BJ (cell line): ENCODE measurements at regions of chr10 and their contacts with region 1.

Region 1: DNA sequence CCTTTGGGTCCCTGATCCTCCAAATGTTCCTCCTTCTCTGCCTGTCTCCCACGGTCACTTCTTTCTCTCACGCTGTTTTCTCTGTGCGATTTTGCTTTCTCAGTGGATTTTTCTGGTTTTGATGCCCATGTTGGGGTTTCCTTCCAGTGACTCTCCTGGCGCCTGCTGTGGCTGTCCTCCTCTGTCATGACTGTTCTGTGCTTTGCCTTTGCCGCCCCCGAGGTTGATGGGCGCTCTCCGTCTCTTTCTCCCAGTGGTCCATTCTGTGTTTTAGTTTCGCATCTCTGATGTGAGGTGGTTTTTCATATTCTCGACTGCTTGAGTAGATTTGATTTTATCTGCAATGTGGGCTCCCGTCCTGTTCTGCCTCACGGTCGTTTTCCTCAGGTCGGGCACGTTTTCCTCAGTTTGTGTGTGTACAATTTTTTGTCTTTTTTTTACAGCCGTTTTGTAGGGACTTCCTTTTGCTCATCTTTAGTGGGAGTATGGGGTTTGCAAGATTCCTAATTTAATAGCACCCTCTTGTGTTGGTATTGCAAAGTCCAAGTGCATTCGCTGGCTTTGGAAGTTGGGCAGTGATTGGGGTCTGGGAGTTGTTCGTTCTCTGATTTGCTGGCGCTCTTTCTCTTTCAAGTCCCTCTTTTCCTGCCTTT is 100.0 kb downstream of the INPP5A start:
- DNase-seq: no peak
- H3K4me3 ChIP-seq: no peak overlapping the region
- H3K27me3 ChIP-seq: no peaks in the 10 kb centered on the region
- CTCF ChIP-seq: peak; percentile 70

Region 2: DNA sequence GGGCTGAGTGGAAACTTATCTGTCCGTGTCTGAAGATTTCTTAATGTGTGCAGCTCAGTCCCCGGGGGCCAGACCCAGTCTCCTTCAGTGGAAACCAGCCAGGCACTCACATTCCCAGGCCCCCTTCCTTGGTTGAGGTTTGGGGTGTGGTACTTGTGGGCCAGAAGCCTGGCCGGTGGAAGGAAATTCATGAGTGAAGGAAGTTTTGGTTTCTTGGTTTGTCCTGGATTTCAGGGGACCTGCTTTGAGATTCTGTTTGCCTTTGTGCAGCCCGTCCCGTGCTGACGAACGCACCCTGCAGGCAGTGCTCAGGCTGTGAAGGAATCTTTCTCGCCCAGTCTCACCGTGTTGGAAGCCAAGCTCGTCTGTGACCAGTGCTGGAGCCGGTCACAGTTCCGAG is 97.1 kb before region 1 on chr10:
- CTCF ChIA-PET with region 1: interaction called, 11 read pairs
- POLR2A ChIA-PET with region 1: no interaction called
- DNase-seq: no peak
- H3K4me3 ChIP-seq: peak overlapping the region; percentile 30; the same call in 1 of the 2 replicates
- H3K27me3 ChIP-seq: no peaks in the 10 kb centered on the region
- CTCF ChIP-seq: peak; percentile 66

Region 3: DNA sequence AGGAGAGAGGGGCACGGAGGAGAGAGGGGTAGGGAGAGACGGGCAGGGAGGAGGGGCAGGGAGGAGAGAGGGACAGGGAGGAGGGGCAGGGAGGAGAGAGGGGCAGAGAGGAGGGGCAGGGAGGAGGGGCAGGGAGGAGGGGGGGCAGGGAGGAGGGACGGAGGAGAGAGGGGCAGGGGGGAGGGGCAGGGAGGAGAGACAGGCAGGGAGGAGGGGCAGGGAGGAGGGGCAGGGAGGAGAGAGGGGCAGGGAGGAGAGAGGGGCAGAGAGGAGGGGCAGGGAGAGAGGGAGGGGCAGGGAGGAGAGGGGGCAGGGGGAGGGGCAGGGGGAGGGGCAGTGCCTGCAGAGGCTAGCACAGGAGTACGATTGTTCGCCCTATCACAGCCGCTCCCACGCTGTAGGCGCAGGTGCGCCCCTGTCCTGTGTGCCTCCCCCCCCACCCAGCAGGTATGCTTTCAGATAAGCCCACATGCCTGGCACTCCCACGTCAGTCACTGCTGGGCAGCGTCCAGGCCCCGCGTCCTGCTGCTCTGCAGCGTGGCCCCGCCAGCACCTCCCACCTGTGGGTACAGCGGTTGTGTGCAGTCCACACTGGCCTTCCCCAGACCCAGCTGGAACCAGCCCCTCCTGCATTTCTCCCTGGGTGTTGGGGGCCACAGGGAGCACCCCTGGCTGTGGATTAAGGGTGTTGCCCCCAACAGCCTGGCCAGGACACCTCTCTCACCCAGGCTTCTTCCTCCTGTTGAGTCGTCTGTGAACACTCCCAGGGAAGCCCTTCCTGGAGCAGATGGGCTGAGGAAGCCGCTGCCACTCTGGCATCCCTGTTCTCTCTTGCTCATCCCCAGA is 137.5 kb after region 1 on chr10:
- CTCF ChIA-PET with region 1: no interaction called
- POLR2A ChIA-PET with region 1: no interaction called
- DNase-seq: no peak
- H3K4me3 ChIP-seq: no peak overlapping the region
- H3K27me3 ChIP-seq: no peaks in the 10 kb centered on the region
- CTCF ChIP-seq: no peak